ENCODE measurements at regions of chr1 and their contacts with region 1.

Region 1: GRCh38 chr1:113928941-113929749 is at the start of gene HIPK1:
- DNase-seq: peak; percentile 92 to 94 (median 93)
- H3K4me3 ChIP-seq: peak within 1 kb of the TSS; percentile 79 to 98
- H3K4me3 Mint-ChIP-seq: peak within 1 kb of the TSS; percentile 96 to 99 (median 98)
- H3K27ac ChIP-seq: peak within 1 kb of the TSS; percentile 97
- H3K27ac Mint-ChIP-seq: peak within 1 kb of the TSS; percentile 97 to 100 (median 100)
- H3K4me1 ChIP-seq: peaks cover 42% of the 10 kb centered on the region
- H3K4me1 Mint-ChIP-seq: peaks cover 34 to 59% (median 47%) of the 10 kb centered on the region in 4 donors
- H3K27me3 ChIP-seq: no peaks in the 10 kb centered on the region
- H3K27me3 Mint-ChIP-seq: no peaks in the 10 kb centered on the region
- total RNA-seq, gene HIPK1: 107 to 110 TPM

Region 2: GRCh38 chr1:113835642-113836307 is 93.4 kb before region 1 on chr1:
- CTCF ChIA-PET with region 1: interaction called, 46 read pairs
- POLR2A ChIA-PET with region 1: interaction called, 39 read pairs
- intact Hi-C with region 1: loop called (anchors 1 kb)
- DNase-seq: peak in 4 of 5 donors; percentile 52 to 64 (median 59)
- H3K4me3 ChIP-seq: no peak overlapping the region
- H3K4me3 Mint-ChIP-seq: peak overlapping the region in 2 of 8 donors; percentile 19 to 36
- H3K27ac ChIP-seq: no peak overlapping the region
- H3K27ac Mint-ChIP-seq: peak overlapping the region in 3 of 7 donors; percentile 9 to 80 (median 65)
- H3K4me1 ChIP-seq: peaks cover 6% of the 10 kb centered on the region
- H3K4me1 Mint-ChIP-seq: peaks cover 2 to 5% (median 5%) of the 10 kb centered on the region in 4 donors
- H3K27me3 ChIP-seq: no peaks in the 10 kb centered on the region
- H3K27me3 Mint-ChIP-seq: no peaks in the 10 kb centered on the region

Region 3: GRCh38 chr1:113881661-113882060 is 47.5 kb before region 1 on chr1:
- CTCF ChIA-PET with region 1: interaction called, 7 read pairs
- POLR2A ChIA-PET with region 1: interaction called, 27 read pairs
- intact Hi-C with region 1: no loop called
- DNase-seq: no peak
- H3K4me3 ChIP-seq: no peak overlapping the region
- H3K4me3 Mint-ChIP-seq: no peak overlapping the region
- H3K27ac ChIP-seq: no peak overlapping the region
- H3K27ac Mint-ChIP-seq: peak overlapping the region in 5 of 7 donors; percentile 22 to 78 (median 66)
- H3K4me1 ChIP-seq: peaks cover 46% of the 10 kb centered on the region
- H3K4me1 Mint-ChIP-seq: peaks cover 36 to 55% (median 42%) of the 10 kb centered on the region in 4 donors
- H3K27me3 ChIP-seq: no peaks in the 10 kb centered on the region
- H3K27me3 Mint-ChIP-seq: no peaks in the 10 kb centered on the region

Region 4: GRCh38 chr1:113940365-113941244 is 11.5 kb after region 1 on chr1:
- CTCF ChIA-PET with region 1: interaction called, 98 read pairs
- POLR2A ChIA-PET with region 1: interaction called, 120 read pairs
- intact Hi-C with region 1: loop called (anchors 1 kb)
- DNase-seq: peak; percentile 37 to 76 (median 47)
- H3K4me3 ChIP-seq: peak overlapping the region in 1 of 2 donors; percentile 35
- H3K4me3 Mint-ChIP-seq: peak overlapping the region; percentile 59 to 89 (median 82)
- H3K27ac ChIP-seq: peak overlapping the region; percentile 52
- H3K27ac Mint-ChIP-seq: peak overlapping the region; percentile 86 to 97 (median 91)
- H3K4me1 ChIP-seq: peaks cover 85% of the 10 kb centered on the region
- H3K4me1 Mint-ChIP-seq: peaks cover 56 to 85% (median 71%) of the 10 kb centered on the region in 4 donors
- H3K27me3 ChIP-seq: no peaks in the 10 kb centered on the region
- H3K27me3 Mint-ChIP-seq: no peaks in the 10 kb centered on the region

Region 5: DNA sequence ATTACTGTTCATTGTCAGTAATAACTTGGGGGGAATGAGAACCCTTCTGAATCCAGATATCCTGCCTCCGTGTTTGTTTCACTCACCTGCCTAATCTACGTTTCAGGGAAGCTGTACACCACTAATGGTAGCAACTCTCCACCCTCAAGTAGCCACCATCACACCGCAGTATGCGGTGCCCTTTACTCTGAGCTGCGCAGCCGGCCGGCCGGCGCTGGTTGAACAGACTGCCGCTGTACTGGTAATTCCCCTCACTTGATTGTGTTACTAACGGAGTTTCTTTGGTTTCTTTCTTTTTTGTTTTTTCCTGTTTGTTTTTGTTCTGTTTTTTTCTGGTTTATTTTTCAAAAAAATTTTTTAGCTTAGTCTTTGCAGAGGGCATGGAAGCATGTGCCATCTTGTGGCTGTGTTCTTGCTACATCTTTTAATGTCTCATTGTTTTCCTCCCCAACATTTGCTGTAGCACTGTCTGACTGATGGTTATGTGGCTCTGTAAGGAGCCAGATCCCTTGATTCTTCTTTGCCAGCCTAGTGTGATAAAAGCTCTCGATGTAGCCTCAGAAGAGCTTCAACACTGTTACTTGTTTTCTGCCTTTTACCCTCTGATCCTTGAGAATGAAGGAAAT is 34.2 kb after region 1 on chr1:
- CTCF ChIA-PET with region 1: interaction called, 37 read pairs
- POLR2A ChIA-PET with region 1: interaction called, 16 read pairs
- intact Hi-C with region 1: no loop called
- DNase-seq: peak in 1 of 5 donors; percentile 13
- H3K4me3 ChIP-seq: no peak overlapping the region
- H3K4me3 Mint-ChIP-seq: no peak overlapping the region
- H3K27ac ChIP-seq: no peak overlapping the region
- H3K27ac Mint-ChIP-seq: peak overlapping the region in 5 of 7 donors; percentile 57 to 91 (median 71)
- H3K4me1 ChIP-seq: no peaks in the 10 kb centered on the region
- H3K4me1 Mint-ChIP-seq: peaks cover 7 to 17% (median 13%) of the 10 kb centered on the region in 4 donors
- H3K27me3 ChIP-seq: no peaks in the 10 kb centered on the region
- H3K27me3 Mint-ChIP-seq: no peaks in the 10 kb centered on the region

Region 6: GRCh38 chr1:113991467-113991997 is 62.4 kb after region 1 on chr1:
- CTCF ChIA-PET with region 1: no interaction called
- POLR2A ChIA-PET with region 1: no interaction called
- intact Hi-C with region 1: no loop called
- DNase-seq: no peak
- H3K4me3 ChIP-seq: no peak overlapping the region
- H3K4me3 Mint-ChIP-seq: no peak overlapping the region
- H3K27ac ChIP-seq: no peak overlapping the region
- H3K27ac Mint-ChIP-seq: no peak overlapping the region
- H3K4me1 ChIP-seq: no peaks in the 10 kb centered on the region
- H3K4me1 Mint-ChIP-seq: no peaks in the 10 kb centered on the region
- H3K27me3 ChIP-seq: no peaks in the 10 kb centered on the region
- H3K27me3 Mint-ChIP-seq: peaks cover 3 to 6% of the 10 kb centered on the region in 2 donors

Region 7: DNA sequence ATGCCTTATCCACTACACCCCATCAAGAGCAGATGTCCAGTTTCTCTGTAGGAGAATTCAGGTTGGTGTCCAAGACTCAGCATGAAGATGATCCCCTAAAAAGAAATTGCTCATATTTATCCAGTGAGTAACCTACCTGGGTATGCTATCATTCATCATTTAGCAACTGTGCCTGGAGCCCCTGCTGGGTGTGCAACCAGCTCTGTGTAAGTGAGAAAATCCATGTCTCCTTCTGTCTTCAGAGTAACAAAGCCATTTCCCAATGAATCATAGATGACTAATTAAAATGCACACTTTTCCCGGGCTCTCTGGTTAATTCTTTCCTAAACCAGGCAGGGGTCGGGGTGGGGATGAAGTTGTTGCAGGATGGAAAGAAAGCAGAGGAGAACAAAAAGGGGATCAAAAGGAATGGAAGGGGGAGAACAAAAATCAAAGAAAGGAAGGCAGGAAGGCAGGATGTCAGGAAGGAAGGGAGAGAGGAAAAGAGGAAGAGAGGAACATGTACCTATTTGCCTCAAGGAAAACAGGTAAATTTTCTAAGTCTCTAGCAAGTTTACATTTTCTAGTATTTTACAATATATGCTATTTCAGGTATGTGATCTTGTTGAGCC is 86.0 kb after region 1 on chr1:
- CTCF ChIA-PET with region 1: no interaction called
- POLR2A ChIA-PET with region 1: no interaction called
- intact Hi-C with region 1: no loop called
- DNase-seq: no peak
- H3K4me3 ChIP-seq: no peak overlapping the region
- H3K4me3 Mint-ChIP-seq: no peak overlapping the region
- H3K27ac ChIP-seq: no peak overlapping the region
- H3K27ac Mint-ChIP-seq: no peak overlapping the region
- H3K4me1 ChIP-seq: no peaks in the 10 kb centered on the region
- H3K4me1 Mint-ChIP-seq: no peaks in the 10 kb centered on the region
- H3K27me3 ChIP-seq: no peaks in the 10 kb centered on the region
- H3K27me3 Mint-ChIP-seq: peaks cover 6 to 8% of the 10 kb centered on the region in 2 donors